ENCODE measurements at regions of chr5 and their contacts with region 1.

Region 1: DNA sequence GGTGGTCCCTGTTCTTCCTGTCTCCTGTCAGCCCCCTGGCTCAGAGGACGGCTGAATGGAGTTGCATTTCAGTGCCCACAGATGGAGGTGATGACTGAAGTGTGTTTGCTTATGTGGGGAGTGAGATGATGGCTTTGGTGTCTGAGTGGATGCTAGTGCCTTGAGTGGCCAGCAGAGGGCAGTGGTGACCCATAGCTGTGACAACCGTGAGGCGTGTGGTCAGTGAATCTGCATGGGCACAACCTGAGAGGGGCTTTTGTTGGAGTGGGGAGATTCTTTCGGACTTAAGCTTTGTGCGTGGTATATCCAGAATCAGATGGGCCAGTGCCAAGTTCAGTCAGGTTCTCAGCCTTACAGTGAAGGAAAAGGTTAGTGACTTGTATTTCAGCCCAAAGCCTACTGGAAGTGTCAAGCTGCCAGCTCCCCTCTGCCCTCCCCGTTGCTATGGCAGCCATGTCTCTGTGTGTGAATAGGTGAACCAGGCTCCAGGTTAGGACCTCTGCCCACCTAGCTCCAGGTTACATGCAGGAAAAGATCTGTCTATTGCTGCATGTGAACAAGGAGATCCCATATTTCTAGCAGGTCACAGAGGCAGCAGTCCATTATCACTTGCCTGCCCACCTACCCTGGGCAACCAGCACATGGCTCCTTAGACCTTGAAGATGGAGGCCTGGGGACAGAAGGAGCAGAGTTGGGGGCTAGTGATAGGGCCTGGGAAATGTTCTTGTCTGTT is 14.7 kb upstream of the CXXC5 start:
- DNase-seq: peak; percentile 76
- H3K4me3 ChIP-seq: no peak overlapping the region
- H3K27ac ChIP-seq: no peak overlapping the region
- H3K4me1 ChIP-seq: peaks cover 48% of the 10 kb centered on the region
- H3K27me3 ChIP-seq: no peaks in the 10 kb centered on the region
- CTCF ChIP-seq: peak; percentile 93 to 96 (median 95)
- POLR2A ChIP-seq: no peak

Region 2: GRCh38 chr5:139696894-139697658 is 63.6 kb after region 1 on chr5:
- intact Hi-C with region 1: loop called (anchors 10 kb)
- DNase-seq: peak; percentile 82
- H3K4me3 ChIP-seq: peak overlapping the region; percentile 49 to 60
- H3K27ac ChIP-seq: peak overlapping the region; percentile 85 to 91
- H3K4me1 ChIP-seq: peaks cover 42% of the 10 kb centered on the region
- H3K27me3 ChIP-seq: no peaks in the 10 kb centered on the region
- CTCF ChIP-seq: no peak
- POLR2A ChIP-seq: no peak

Region 3: GRCh38 chr5:139765409-139766217 is 132.2 kb after region 1 on chr5:
- intact Hi-C with region 1: loop called (anchors 5 kb)
- DNase-seq: peak; percentile 85
- H3K4me3 ChIP-seq: peak overlapping the region; percentile 49 to 63
- H3K27ac ChIP-seq: no peak overlapping the region
- H3K4me1 ChIP-seq: peaks cover 10% of the 10 kb centered on the region
- H3K27me3 ChIP-seq: no peaks in the 10 kb centered on the region
- CTCF ChIP-seq: peak; percentile 94 to 99 (median 98)
- POLR2A ChIP-seq: no peak

Measured in testis (tissue), 5 donors.